ENCODE measurements at regions of chr1 and their contacts with region 1.

Region 1: DNA sequence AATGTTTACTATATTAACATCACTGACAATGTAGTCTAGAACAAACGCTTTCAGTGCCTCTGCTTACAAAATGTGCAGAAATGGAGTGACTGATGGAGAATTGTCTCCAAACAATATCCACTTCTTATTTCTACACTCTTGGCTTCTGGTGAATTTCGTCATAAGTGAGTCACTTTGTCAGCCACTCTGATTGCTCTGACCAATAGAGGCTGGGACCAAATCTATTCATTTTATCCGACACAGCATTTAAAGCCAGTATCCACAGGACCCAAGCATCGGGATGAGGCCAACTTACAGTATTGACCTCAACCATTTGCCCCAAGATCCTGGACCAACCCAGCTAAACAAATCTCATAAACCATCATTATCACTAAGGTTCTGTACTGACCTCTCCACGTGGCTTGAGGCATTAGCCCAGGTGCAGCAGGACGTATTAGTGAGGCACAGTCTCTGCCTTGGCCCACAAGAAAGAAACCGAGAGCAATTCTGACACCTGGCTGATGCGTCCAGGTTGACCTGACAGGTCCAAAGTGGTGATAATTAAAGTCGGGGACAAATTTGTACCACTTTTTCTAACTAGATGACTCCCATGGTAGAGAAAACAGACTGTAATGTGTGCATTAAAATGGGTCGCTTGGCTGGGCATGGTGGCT is 53.3 kb upstream of the ERO1B start:
- DNase-seq: peak in 1 of 2 experiments; percentile 32
- H3K4me3 ChIP-seq: no peak overlapping the region
- H3K27ac ChIP-seq: no peak overlapping the region
- H3K4me1 ChIP-seq: peaks cover 0 to 4% (median 0%) of the 10 kb centered on the region in 4 experiments; a peak in 1 of 7 replicates
- H3K27me3 ChIP-seq: no peaks in the 10 kb centered on the region
- CTCF ChIP-seq: no peak
- EP300 ChIP-seq: no peak
- POLR2A ChIP-seq: no peak
- RAD21 ChIP-seq: no peak

Region 2: DNA sequence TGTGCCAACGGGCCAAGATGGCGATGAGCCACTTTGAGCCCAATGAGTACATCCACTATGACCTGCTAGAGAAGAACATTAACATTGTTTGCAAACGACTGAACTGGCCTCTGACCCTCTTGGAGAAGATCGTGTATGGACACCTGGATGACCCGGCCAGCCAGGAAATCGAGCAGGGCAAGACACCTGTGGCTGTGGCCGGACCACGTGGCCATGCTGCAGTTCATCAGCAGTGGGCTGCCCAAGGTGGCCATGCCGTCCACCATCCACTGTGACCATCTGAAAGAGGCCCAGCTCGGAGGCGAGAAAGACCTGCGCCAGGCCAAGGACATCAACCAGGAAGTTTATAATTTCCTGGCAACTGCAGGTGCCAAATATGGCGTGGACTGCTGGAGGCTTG is 224.9 kb before region 1 on chr1:
- CTCF ChIA-PET with region 1: no interaction called
- POLR2A ChIA-PET with region 1: no interaction called
- DNase-seq: no peak
- H3K4me3 ChIP-seq: no peak overlapping the region
- H3K27ac ChIP-seq: no peak overlapping the region
- H3K4me1 ChIP-seq: no peaks in the 10 kb centered on the region
- H3K27me3 ChIP-seq: no peaks in the 10 kb centered on the region
- CTCF ChIP-seq: no peak
- EP300 ChIP-seq: no peak
- POLR2A ChIP-seq: no peak
- RAD21 ChIP-seq: no peak

Region 3: GRCh38 chr1:236345728-236346127 is 10.7 kb after region 1 on chr1:
- CTCF ChIA-PET with region 1: interaction called, 11 read pairs
- POLR2A ChIA-PET with region 1: no interaction called
- DNase-seq: peak in 1 of 2 experiments; percentile 43
- H3K4me3 ChIP-seq: no peak overlapping the region
- H3K27ac ChIP-seq: no peak overlapping the region
- H3K4me1 ChIP-seq: no peaks in the 10 kb centered on the region
- H3K27me3 ChIP-seq: no peaks in the 10 kb centered on the region
- CTCF ChIP-seq: peak in 2 of 3 experiments; percentile 44 to 62; a peak in 3 of 4 replicates
- EP300 ChIP-seq: no peak
- POLR2A ChIP-seq: no peak
- RAD21 ChIP-seq: peak; percentile 61 to 71

Region 4: DNA sequence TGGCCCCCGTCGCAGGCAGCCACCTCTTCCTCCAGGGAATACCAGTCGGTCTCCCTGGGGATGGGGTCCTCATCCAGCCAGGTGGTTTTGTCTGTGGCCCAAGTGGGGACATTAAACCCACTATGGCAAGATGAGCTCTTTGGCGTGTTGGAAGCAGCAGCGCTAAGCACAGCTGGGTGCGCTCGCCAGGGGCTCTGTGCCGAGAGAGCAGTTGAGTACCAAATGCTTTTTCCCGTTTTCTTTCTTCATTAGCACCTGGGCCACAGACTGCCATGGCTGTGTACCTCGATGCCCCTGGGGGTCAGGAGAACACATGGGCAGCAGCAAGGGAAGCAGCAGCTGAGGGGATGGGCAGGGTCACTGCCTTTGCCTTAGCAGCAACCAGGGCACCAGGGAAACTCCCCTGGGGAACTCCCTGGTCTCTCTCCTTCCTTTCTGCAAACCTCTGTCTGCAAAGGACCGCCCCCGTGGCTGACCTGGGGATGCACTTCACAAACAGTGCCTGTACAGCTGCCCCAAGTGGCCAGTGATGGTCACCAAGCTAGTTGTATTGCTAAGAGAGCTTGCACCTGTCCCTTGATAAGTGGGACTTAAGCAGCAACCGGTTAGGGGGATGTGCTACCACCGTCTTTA is 90.1 kb after region 1 on chr1:
- CTCF ChIA-PET with region 1: no interaction called
- POLR2A ChIA-PET with region 1: no interaction called
- DNase-seq: no peak
- H3K4me3 ChIP-seq: no peak overlapping the region
- H3K27ac ChIP-seq: no peak overlapping the region
- H3K4me1 ChIP-seq: no peaks in the 10 kb centered on the region; a peak in 1 of 7 replicates
- H3K27me3 ChIP-seq: no peaks in the 10 kb centered on the region
- CTCF ChIP-seq: peak in 1 of 3 experiments; percentile 27; a peak in 1 of 4 replicates
- EP300 ChIP-seq: no peak
- POLR2A ChIP-seq: no peak
- RAD21 ChIP-seq: no peak

Measured in H1 (cell line).